GM23248 (cell line): ENCODE measurements at regions of chr2 and their contacts with region 1.

Region 1: GRCh38 chr2:38734299-38735058 is 16.7 kb downstream of the SRSF7 start:
- DNase-seq: no peak
- H3K4me3 ChIP-seq: no peak overlapping the region
- H3K27ac ChIP-seq: no peak overlapping the region
- H3K4me1 ChIP-seq: no peaks in the 10 kb centered on the region
- H3K27me3 ChIP-seq: no peaks in the 10 kb centered on the region

Region 2: DNA sequence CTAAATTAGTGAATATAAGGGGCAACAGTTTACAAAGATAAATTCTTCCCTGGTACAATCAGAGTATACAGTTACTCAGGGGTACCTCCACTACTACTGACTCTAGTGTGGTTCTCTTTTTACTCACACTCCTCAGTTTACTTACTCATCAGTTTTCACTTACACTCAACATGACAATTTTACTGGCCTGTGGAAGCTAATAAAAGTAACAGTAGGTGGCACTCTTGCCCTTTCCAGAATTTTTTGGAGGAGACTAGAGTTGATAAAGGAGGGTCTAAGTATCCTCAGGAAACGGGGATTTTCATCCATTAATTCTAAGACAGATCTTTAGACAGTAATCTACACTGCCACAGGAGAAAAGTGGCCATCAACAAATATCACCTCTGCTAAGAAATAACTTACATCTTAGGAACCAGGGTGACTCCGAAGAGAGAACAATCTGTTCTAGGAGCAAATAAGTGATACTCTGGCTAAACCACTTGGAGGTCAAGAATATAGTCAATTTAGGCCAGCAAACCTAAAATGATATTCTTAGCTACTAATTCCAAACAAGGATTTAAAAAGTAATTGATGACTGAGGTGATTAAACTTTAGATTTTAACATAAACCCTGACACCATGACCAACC is 418.7 kb before region 1 on chr2:
- in situ Hi-C with region 1: loop called (anchors 10 kb)
- DNase-seq: peak; percentile 63
- H3K4me3 ChIP-seq: no peak overlapping the region
- H3K27ac ChIP-seq: no peak overlapping the region
- H3K4me1 ChIP-seq: no peaks in the 10 kb centered on the region
- H3K27me3 ChIP-seq: no peaks in the 10 kb centered on the region

Region 3: DNA sequence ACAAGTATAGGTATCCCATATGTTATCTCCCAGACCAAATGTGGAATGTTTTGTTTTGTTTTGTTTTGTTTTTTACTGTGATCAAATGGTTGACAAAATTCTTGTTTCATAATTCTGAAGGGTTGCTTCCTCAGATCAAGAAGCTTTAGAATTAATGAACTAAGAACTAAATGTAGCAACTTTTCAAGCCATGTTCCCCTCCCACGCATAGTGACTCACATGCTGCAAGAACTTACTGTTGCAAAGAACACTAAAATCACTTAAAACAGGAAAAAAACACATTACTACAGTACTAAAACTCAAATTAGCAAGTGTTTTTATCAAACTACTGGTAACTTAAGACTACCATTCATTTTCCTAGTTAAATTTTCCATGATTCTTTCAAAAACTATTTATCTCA is 162.3 kb before region 1 on chr2:
- in situ Hi-C with region 1: loop called (anchors 10 kb)
- DNase-seq: peak; percentile 92
- H3K4me3 ChIP-seq: peak overlapping the region; percentile 10; the same call in 1 of the 2 replicates
- H3K27ac ChIP-seq: peak overlapping the region; percentile 48
- H3K4me1 ChIP-seq: peaks cover 19% of the 10 kb centered on the region
- H3K27me3 ChIP-seq: no peaks in the 10 kb centered on the region